ENCODE measurements at regions of chr19 and their contacts with region 1.

Region 1: GRCh38 chr19:5048091-5048726 is 79.3 kb downstream of the KDM4B start:
- DNase-seq: no peak
- ATAC-seq: peak; percentile 96
- H3K4me3 ChIP-seq: no peak overlapping the region
- H3K27ac ChIP-seq: no peak overlapping the region
- H3K4me1 ChIP-seq: no peaks in the 10 kb centered on the region
- H3K27me3 ChIP-seq: no peaks in the 10 kb centered on the region
- CTCF ChIP-seq: peak; percentile 92 to 99 (median 96); a peak in 5 of 6 replicates
- EP300 ChIP-seq: no peak
- POLR2A ChIP-seq: no peak
- RAD21 ChIP-seq: peak; percentile 91

Region 2: DNA sequence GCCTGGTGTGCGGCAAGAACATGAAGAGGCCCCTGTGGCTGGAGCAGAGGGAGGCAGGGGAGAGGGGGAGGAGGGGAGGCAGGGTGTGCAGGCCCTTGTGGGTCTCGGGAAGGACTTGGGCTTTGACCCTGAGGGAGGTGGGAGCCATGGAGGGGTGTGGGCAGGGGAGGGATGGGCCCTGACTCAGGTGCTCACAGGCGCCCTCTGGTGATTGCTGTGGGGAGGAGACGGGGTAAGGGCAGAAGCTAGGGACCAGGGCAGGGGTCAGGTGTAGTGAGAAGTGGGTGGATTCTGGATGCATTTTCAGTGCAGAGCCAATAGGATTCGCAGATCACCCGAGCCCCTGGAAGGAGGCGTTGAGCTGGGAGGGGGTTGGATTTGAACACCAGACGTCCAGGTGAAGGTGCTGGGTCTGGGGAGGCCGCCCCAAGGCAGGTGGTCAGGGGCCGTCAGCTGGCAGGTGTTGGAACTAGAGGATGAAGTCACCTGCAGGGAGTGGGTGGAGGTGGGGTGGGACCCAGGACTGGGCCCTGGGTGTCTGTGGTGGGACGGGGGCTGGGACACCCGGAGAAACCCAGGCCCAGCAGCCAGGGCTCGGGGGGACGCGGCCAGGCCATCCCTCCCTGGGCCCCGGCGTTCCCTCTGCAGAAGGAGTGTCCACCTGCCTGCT is 106.1 kb after region 1 on chr19:
- CTCF ChIA-PET with region 1: interaction called, 4 read pairs
- POLR2A ChIA-PET with region 1: no interaction called
- RAD21 ChIA-PET with region 1: no interaction called
- SMC1A ChIA-PET with region 1: no interaction called
- in situ Hi-C with region 1: no loop called
- intact Hi-C with region 1: loop called (anchors 2 kb)
- DNase-seq: no peak
- ATAC-seq: peak; percentile 92
- H3K4me3 ChIP-seq: no peak overlapping the region
- H3K27ac ChIP-seq: no peak overlapping the region
- H3K4me1 ChIP-seq: no peaks in the 10 kb centered on the region
- H3K27me3 ChIP-seq: no peaks in the 10 kb centered on the region
- CTCF ChIP-seq: peak; percentile 48 to 78 (median 51)
- EP300 ChIP-seq: no peak
- POLR2A ChIP-seq: peak; percentile 63
- RAD21 ChIP-seq: peak; percentile 35; the same call in 1 of the 2 replicates

Region 3: DNA sequence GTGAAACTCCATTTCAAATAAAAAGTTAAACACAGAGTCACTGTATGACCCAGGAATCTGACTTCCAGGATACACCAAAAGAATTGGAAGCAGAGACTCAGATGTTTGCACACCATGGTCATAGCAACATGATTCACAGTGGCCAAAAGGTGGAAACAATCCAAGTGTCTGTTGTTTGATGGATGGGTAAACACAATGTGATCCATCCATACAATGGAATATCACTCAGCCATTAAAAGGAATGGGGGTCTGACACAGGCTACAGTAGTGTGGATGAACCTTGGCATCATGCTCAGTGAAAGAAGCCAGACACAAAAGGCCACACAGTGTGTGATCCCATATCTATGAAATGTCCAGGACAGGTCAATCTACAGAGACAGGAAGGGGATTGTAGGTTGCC is 118.1 kb after region 1 on chr19:
- CTCF ChIA-PET with region 1: interaction called, 5 read pairs
- POLR2A ChIA-PET with region 1: no interaction called
- RAD21 ChIA-PET with region 1: no interaction called
- SMC1A ChIA-PET with region 1: no interaction called
- in situ Hi-C with region 1: loop called (anchors 5 kb)
- intact Hi-C with region 1: no loop called
- DNase-seq: no peak
- ATAC-seq: no peak
- H3K4me3 ChIP-seq: no peak overlapping the region
- H3K27ac ChIP-seq: no peak overlapping the region
- H3K4me1 ChIP-seq: no peaks in the 10 kb centered on the region
- H3K27me3 ChIP-seq: no peaks in the 10 kb centered on the region
- CTCF ChIP-seq: no peak
- EP300 ChIP-seq: no peak
- POLR2A ChIP-seq: no peak
- RAD21 ChIP-seq: no peak

Region 4: DNA sequence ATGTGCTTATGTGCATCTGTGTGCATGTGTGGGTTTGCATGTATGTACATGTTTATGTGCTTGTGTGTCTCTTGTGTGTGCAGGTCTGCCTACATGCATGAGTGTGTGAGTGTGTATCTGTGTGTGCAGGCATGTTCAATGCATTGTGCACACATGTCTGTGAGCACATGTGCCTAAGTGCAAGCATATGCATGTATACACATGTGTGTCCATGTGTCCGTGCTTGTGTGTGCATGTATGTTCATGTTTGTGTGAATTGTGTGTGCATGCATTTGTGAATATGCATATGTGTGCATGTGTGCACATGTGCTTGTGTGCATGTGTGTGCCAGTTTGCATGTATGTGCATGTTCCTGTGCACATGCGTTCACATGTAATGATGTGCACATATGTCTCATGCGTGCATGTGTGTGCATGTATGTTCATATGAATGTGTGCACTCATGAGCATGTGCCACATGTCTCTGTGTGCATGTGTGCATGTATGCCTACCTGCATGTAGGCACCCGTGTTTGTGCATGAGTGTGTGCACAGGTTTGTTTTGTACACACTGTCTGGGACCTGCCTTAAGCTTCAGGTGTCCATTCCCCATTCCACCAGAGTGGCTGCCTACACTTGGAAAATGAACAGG is 324.5 kb after region 1 on chr19:
- CTCF ChIA-PET with region 1: interaction called, 3 read pairs
- POLR2A ChIA-PET with region 1: no interaction called
- RAD21 ChIA-PET with region 1: no interaction called
- SMC1A ChIA-PET with region 1: no interaction called
- in situ Hi-C with region 1: no loop called
- intact Hi-C with region 1: loop called (anchors 1 kb)
- DNase-seq: no peak
- ATAC-seq: no peak
- H3K4me3 ChIP-seq: no peak overlapping the region
- H3K27ac ChIP-seq: no peak overlapping the region
- H3K4me1 ChIP-seq: no peaks in the 10 kb centered on the region
- H3K27me3 ChIP-seq: no peaks in the 10 kb centered on the region
- CTCF ChIP-seq: no peak
- EP300 ChIP-seq: no peak
- POLR2A ChIP-seq: no peak
- RAD21 ChIP-seq: no peak